Left colon (tissue), 2 donors: ENCODE measurements at regions of chr15 and their contacts with region 1.

Region 1: DNA sequence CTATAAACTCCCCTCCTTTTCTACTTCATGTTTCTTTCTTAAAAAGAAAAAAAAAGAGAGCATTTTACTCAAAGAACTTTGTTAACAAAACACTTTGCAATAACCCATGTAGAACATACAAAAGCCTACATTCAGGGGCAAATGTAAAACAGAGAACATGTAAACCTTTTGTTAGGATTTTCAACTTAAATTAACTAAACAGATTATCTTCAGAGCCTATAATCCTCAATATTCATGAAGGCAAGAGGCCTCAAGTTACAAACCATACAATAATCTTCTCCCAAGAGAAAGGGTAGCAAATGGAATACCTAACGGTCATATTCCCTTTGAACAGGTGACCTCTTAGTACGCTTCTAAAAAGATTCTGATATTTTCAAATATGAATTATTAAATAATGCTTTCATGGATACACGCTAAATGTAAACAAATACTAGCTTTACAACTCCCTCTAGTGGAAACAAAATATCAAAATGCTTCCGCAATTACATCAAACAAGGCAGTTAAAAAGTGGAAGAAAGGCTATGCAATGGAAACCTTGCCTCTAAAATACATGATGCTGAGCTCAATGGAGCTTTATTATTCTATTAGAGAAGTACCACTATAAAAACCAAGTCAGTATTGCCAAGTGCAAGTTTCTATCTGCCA is 9.9 kb downstream of the CEP152 start:
- DNase-seq: no peak
- ATAC-seq: peak; percentile 78

Region 2: GRCh38 chr15:48352474-48353072 is 448.4 kb before region 1 on chr15:
- intact Hi-C with region 1: loop called in 1 of 2 experiments (anchors 10 kb)
- DNase-seq: peak; percentile 32 to 51
- ATAC-seq: peak; percentile 82

Region 3: DNA sequence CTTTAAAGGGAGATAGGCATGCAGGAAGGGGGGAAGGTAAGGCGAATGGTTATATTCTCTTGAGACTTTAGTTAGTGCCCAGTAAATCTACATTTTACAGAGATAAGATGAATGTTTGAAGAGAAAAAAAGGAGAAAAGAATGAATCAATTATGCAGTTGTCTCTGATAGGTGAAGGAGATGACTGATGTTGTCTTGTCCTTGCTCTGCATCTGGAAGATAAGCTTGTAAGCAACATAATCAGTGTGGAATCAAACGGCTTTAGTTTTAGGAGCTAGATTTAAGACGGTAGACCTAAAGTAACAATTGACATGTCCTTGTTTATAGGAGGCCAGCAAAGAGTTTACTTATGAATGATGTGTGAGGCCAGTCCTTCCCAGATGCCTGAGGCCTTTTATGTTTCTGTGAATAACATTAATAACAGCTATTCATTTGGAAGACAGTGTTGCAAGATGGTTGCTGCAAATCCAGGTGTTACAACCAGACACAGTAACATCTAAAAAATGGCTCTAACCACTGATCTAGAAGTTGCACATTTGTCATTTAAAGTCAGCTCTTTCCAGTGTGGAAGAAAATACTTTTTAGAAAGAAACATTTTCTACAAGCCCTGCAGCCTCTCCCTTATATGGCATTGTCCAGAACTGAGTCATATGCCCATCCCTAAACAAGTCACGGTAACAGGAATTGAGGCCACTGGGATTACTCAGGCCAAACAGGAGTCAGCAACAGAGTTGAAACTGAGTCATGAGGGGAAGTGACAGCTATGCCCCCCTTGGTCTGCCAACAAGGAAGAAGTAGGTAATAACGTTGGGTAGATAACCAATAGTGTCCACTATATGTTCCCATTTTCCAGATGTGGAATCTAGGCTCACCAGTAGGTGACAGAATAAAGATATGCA is 77.9 kb before region 1 on chr15:
- intact Hi-C with region 1: no loop called
- DNase-seq: no peak
- ATAC-seq: no peak